Dendritic cell treated with granulocyte-macrophage colony-stimulating factor and Interleukin-4, amounts not matched to agents 40 ng/mL and 50 ng/mL, for 4 days (primary cell): ENCODE measurements at regions of chr7 and their contacts with region 1.

Region 1: GRCh38 chr7:1664711-1665548 is 5.1 kb upstream of the ELFN1 start:
- H3K4me3 Mint-ChIP-seq: peak overlapping the region; percentile 62
- H3K27ac Mint-ChIP-seq: no peak overlapping the region
- H3K4me1 Mint-ChIP-seq: peaks cover 11% of the 10 kb centered on the region
- H3K27me3 Mint-ChIP-seq: peaks cover 73% of the 10 kb centered on the region

Region 2: GRCh38 chr7:1268738-1269313 is 396.1 kb before region 1 on chr7:
- intact Hi-C with region 1: no loop called
- H3K4me3 Mint-ChIP-seq: no peak overlapping the region
- H3K27ac Mint-ChIP-seq: no peak overlapping the region
- H3K4me1 Mint-ChIP-seq: no peaks in the 10 kb centered on the region
- H3K27me3 Mint-ChIP-seq: peaks cover 40% of the 10 kb centered on the region

Region 3: DNA sequence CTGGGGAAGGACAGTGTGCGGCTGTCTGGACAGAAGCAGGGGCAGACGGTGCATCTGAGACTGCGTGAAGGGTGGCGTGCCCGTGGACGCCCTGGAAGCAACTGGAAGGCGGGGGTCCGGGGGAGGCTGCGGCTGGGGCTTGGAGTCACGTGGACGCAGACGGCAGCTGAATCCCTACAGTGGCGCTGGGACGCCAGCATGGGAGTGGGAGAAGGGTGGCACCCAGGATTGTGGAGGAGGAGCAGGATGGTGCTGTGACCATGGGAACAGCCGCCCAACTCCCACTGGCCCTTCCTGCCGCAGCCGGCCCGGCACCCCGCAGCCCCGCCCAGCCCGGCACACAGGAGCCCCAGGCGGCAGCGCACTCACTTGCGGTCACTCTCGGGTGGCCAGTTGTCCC is 170.5 kb before region 1 on chr7:
- intact Hi-C with region 1: no loop called
- H3K4me3 Mint-ChIP-seq: no peak overlapping the region
- H3K27ac Mint-ChIP-seq: no peak overlapping the region
- H3K4me1 Mint-ChIP-seq: no peaks in the 10 kb centered on the region
- H3K27me3 Mint-ChIP-seq: no peaks in the 10 kb centered on the region

Region 4: DNA sequence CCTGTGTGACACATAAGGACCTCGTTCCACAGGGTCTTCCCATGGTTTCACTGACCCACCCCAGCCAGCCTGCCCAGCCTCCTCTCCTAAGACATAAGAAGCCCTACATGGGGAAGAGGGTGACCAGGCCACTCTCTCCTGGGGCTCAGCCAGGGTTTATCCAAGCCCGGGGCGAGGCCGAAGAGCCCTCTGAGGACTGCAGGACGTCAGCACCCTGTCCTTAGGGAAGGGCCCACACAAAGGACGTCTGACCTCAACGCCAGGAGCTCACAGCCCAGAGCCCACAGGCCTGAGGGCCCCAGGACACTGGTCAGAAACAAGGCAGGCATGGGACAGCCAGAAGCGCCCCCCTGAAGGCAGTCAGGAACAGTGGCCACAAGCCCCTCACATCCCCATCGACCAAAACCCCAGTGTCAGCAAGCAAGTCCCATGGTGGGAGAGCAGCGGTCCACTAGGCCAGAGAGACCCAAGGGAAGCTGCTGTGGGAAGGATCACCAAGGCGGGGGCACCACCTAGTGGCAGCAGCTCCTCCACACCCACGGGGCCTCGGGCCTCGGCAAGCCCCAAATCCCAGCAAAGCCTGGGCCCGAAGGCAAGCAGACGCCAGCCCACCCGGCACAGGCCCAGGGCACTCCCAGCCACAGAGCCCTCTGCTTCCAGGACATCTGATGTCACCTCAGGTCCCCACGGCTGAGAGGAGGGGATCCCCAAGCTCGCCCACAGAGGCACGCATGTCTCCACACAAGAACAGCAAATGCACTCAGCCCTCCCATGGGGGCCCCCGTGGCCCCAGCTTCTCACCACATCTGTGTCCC is 544.4 kb after region 1 on chr7:
- intact Hi-C with region 1: loop called (anchors 2 kb)
- H3K4me3 Mint-ChIP-seq: no peak overlapping the region
- H3K27ac Mint-ChIP-seq: no peak overlapping the region
- H3K4me1 Mint-ChIP-seq: peaks cover 2% of the 10 kb centered on the region
- H3K27me3 Mint-ChIP-seq: no peaks in the 10 kb centered on the region